A673 (cell line): ENCODE measurements at regions of chr22 and their contacts with region 1.

Region 1: DNA sequence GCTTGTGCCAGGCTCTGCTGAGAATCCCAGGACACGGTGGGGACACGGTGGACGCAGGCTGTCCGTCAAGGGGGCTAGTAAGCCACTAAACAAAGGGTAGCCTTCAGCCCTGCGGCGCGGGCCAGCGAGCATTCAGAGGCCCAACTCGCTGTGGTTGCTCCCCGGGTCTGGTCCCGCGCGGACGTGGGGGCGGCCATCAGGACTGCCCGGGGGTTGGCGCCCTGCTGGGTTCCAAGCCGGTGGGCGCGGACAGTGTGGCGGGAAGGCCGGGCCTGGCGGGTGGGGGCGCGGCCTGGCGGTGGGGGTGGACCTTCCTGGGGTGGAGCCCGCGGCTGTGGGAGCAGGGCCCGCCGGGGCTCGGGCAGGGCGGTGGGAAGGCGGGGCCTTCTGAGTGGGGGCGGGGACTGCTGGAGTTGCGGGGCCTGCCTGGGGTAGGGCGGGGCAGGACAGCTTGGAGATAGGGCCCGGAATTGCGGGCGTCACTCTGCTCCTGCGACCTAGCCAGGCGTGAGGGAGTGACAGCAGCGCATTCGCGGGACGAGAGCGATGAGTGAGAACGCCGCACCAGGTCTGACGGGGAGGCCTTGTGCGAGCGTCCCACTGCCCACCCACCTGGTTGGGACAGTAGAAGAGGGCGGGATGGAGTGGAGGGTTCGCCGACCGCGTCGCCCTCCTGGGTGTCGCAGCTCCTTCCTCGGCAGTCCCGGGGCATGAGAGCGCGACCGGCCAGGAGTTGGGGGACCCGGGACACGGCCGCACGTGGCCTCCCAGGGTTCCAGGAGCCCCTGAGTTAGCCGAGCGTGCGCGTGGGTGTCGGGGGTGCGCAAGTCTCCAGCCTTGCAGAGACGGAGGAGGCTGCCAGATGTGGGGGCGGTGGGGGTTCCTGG is at the start of gene SERHL2:
- DNase-seq: peak; percentile 89
- H3K4me3 ChIP-seq: peak within 1 kb of the TSS; percentile 48
- H3K27ac ChIP-seq: no peak within 1 kb of the TSS
- H3K4me1 ChIP-seq: peaks cover 5% of the 10 kb centered on the region
- H3K27me3 ChIP-seq: no peaks in the 10 kb centered on the region
- CTCF ChIP-seq: no peak
- total RNA-seq, gene SERHL2: 0.49 and 0.96 TPM in 2 replicates

Region 2: DNA sequence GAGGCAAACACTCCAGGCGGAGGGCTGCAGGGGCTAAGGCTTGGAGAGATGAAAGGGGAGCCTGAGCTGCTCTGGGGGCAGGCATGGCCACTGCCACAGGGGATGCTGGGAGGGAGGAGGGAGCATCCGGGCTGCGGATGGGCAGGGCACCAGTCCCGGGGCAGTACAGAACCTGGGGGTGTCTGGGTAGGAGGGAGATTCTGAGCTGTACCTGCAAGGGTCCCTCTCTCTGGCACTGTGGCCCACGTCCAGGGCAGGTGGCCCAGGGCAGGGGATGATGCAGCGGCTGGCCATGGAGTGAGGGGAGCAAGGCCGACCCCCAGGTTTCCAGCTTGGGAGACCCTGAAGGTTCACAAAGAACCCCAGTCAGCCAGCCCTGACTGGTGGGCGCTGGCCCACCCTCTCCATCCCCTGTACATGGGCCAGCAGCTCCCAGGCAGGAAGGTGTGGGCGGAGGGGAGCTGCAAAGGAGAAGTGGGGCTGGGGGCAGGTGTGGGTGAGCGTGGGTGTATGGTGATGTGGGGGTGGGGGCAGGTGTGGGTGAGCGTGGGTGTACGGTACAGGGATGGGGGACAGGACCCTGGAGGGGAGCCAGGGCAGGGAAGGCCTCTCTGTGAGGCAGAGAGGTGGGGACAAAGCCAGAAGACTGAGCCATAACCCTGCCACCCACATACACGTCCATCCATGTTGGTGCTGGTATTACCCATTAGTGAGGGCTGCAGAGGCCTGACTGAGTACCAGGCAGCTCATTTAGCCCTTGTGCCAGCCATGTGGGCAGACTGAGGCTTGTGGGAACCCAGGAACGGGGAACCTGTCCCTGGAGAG is 624.9 kb before region 1 on chr22:
- CTCF ChIA-PET with region 1: no interaction called
- POLR2A ChIA-PET with region 1: interaction called, 10 read pairs
- intact Hi-C with region 1: no loop called
- DNase-seq: no peak
- H3K4me3 ChIP-seq: no peak overlapping the region
- H3K27ac ChIP-seq: no peak overlapping the region
- H3K4me1 ChIP-seq: peaks cover 8% of the 10 kb centered on the region
- H3K27me3 ChIP-seq: no peaks in the 10 kb centered on the region
- CTCF ChIP-seq: no peak

Region 3: GRCh38 chr22:42635531-42635930 is 81.8 kb after region 1 on chr22:
- CTCF ChIA-PET with region 1: no interaction called
- POLR2A ChIA-PET with region 1: no interaction called
- intact Hi-C with region 1: no loop called
- DNase-seq: no peak
- H3K4me3 ChIP-seq: no peak overlapping the region
- H3K27ac ChIP-seq: peak overlapping the region; percentile 23
- H3K4me1 ChIP-seq: peaks cover 5% of the 10 kb centered on the region
- H3K27me3 ChIP-seq: no peaks in the 10 kb centered on the region
- CTCF ChIP-seq: no peak